Prostate gland (tissue), 2 donors: ENCODE measurements at regions of chr7 and their contacts with region 1.

Region 1: DNA sequence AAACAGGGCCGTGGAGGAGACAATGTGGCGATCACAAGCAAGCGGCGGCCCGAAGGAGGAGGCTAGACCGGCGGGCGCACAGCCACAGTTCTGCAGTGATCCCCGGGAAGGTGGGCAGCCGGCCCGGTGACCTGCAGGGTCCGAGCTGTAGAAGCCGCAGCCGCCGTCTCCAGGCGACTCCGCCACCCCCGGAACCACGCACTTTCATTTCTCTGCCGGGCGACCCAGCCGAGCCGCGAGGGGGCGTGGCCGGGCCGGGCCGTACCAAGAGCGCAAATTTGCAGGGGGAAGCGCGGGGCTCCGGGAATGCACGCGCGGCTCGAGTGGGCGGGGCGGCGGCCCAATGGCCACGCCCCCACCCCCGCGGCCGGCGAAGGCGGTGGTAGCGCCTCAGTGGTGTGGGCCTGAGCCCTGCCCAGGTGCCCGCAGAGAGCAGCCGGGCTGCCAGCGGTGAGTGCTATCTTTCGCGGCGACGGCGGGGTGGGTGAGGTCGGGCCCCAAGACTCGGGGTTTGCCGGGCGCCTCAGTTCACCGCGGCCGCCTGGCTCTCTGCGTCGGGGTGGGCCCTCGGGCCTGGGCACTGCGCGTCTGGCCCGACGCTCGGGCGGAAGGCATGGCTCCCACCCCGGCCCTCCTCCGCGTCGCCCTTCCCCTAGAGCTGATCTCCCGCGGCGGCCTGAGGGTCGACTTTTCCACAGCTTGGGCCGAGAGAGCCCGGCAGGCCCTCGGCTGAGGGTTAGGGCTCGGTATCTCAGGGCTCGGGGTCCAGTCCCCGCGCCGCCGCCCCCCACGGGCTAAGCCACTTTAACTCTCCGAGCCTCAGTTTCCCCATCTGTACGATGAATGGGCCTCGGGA is at the start of gene POR:
- DNase-seq: peak; percentile 93
- H3K4me3 ChIP-seq: peak within 1 kb of the TSS; percentile 92 to 95
- H3K27ac ChIP-seq: peak within 1 kb of the TSS; percentile 84 to 86
- H3K4me1 ChIP-seq: peaks cover 6% of the 10 kb centered on the region
- H3K27me3 ChIP-seq: no peaks in the 10 kb centered on the region
- CTCF ChIP-seq: peak; percentile 12 to 66 (median 52)
- POLR2A ChIP-seq: peak; percentile 99
- total RNA-seq, gene POR: 88.0 to 136 TPM

Region 2: GRCh38 chr7:75878769-75879611 is 36.0 kb before region 1 on chr7 and contains the start of gene RHBDD2:
- intact Hi-C with region 1: loop called (anchors 5 kb)
- DNase-seq: peak; percentile 94
- H3K4me3 ChIP-seq: peak within 1 kb of the TSS; percentile 74 to 90
- H3K27ac ChIP-seq: peak within 1 kb of the TSS; percentile 94
- H3K4me1 ChIP-seq: no peaks in the 10 kb centered on the region
- H3K27me3 ChIP-seq: no peaks in the 10 kb centered on the region
- CTCF ChIP-seq: peak in 2 of 4 experiments; percentile 55 to 64
- POLR2A ChIP-seq: peak; percentile 99
- total RNA-seq, gene RHBDD2: 101 to 130 TPM

Region 3: DNA sequence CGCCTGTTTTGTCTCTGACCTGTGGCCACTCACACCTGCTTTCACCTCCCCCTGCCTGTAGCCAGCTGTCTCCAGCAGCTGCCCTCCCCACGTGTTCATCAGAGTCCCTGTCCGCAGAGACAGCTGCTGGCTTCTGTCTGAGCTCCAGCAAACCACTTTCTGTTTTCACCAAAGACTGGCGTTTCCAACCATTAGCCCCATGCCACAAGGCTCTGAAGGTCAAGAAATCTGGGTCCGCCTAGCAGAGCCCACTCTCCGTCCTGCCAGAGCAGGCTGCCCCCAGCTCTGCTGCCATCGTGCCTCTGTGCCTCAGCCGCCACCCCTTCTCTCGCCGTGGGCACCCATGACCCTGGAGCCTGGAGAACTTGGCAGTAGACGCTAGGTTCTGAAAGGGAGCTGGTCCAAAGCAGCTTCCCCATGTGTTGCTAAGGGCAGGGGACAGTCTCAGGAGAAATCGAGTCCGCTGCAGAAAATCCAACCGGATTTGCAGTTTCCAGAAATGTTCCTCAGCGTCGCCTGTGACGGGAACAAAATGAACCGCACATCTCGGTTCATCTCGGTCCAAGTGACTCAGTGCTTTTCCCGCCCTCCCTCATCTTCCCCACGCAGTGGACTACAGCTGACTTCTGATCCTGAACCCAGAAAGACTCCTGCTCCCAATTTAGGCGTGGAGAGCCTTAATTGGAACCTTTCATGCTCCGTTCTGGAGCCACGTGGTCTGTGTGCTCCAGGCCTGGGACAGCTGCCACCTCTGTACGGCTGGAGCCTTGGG is 51.4 kb after region 1 on chr7:
- intact Hi-C with region 1: loop called (anchors 5 kb)
- DNase-seq: no peak
- H3K4me3 ChIP-seq: no peak overlapping the region
- H3K27ac ChIP-seq: peak overlapping the region; percentile 76 to 78
- H3K4me1 ChIP-seq: peaks cover 2% of the 10 kb centered on the region
- H3K27me3 ChIP-seq: no peaks in the 10 kb centered on the region
- CTCF ChIP-seq: no peak
- POLR2A ChIP-seq: no peak

Region 4: DNA sequence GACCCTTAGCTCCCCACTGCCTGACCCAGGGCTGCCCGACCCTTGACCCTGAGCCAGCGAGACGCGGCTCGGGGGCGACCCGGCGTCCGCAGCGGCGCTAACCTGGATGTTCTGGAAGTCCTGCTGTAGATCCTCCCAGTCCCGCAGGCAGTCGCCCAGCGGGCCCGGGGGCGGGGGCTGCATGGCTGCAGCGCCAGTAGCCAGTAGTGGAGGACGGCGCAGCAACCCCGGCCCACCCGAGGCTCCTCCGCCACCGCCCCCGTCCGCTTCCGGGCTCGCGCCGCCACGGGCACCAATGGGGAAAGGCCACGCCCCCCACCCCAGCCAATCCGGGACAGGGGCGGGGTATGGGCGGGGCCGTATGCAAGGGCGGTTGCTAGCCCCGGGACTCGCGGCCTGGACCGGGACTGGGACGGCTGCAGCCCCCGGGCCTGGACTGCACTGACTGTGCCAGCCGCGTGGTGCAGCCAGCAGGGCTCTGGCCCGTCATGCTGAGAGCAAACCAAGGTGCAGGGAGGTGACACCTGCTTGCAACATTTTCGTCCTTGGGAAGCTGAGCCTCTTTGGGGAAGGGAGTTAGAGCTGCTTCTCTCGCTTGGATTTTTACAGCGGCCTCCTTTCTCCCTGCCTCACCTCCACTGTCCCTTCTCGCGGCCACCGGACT is 79.6 kb after region 1 on chr7 and contains the start of gene TMEM120A:
- intact Hi-C with region 1: loop called (anchors 10 kb)
- DNase-seq: peak; percentile 94
- H3K4me3 ChIP-seq: peak within 1 kb of the TSS; percentile 84 to 99
- H3K27ac ChIP-seq: peak within 1 kb of the TSS; percentile 88 to 91
- H3K4me1 ChIP-seq: peaks cover 7% of the 10 kb centered on the region
- H3K27me3 ChIP-seq: no peaks in the 10 kb centered on the region
- CTCF ChIP-seq: peak in 2 of 4 experiments; percentile 29 to 45
- POLR2A ChIP-seq: peak; percentile 77
- total RNA-seq, gene TMEM120A: 20.2 to 40.8 TPM